ENCODE measurements at regions of chr17 and their contacts with region 1.

Region 1: DNA sequence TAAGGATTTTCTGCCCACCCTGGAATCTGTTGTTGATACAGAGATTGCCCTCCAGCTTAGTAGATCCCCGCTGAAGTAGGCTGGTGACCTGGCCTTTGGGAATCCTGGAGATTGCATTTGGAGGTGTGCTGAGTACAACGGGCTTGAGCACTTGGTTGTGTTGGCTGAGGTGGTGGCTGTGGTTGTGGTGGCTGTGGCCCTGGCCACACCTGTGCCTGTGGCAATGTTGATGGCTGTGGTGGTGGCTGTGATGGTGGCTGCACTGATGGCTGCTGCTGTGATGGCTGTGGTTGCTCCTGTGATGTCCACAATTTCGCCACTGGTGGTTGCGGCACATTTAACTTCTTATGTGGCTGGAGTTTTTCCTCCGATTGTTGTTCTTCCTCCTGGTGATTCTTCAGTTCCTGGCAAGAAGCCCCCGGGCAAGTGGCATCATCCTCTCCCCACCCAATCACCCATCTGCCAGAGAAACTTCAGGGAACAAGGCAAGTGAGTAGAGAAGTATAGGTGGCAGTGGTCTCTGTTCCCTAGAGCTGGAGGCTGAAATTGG is 4.2 kb downstream of the CCDC200 start:
- DNase-seq: peak in 1 of 5 donors; percentile 8
- ATAC-seq: no peak
- H3K4me3 ChIP-seq: no peak overlapping the region
- H3K27ac ChIP-seq: no peak overlapping the region
- H3K4me1 ChIP-seq: no peaks in the 10 kb centered on the region
- H3K27me3 ChIP-seq: no peaks in the 10 kb centered on the region
- CTCF ChIP-seq: no peak
- POLR2A ChIP-seq: no peak

Region 2: DNA sequence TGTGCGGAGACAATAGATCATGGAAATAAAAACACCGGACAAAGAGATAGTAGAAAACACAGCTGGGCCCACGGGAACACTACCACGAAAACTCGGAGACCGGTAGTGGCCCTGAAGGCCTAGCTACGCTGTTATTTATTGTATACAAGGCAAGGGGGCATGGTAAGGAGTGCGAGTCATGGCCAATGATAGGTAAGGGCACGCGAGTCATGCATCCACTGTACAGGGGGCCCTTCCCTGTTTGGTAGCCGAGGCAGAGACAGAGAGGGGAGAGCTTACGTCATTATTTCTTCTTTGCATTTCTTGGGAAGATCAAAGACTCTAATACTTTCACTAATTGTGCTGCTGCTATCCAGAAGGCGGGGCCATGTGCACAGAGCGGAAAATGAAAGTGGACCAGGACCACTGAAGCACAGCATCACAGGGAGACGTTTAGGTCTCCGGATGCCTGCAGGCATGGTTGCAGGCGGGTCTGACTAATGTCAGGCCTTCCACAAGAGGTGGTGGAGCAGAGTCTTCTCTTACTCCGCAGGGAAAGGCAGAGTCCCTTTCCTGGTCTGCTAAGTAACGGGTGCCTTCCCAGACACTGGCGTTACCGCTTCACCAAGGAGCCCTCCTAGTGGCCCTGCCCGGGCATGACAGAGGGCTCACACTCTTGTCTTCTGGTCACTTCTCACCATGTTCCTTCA is 100.1 kb after region 1 on chr17:
- intact Hi-C with region 1: loop called in 1 of 10 experiments (anchors 10 kb)
- DNase-seq: no peak
- ATAC-seq: peak in 1 of 4 donors; percentile 67
- H3K4me3 ChIP-seq: peak overlapping the region in 1 of 12 donors; percentile 27
- H3K27ac ChIP-seq: no peak overlapping the region
- H3K4me1 ChIP-seq: peaks cover 0 to 6% (median 0%) of the 10 kb centered on the region in 12 donors
- H3K27me3 ChIP-seq: peaks cover 0 to 9% (median 0%) of the 10 kb centered on the region in 9 donors
- CTCF ChIP-seq: peak in 4 of 12 donors; percentile 12 to 51 (median 16)
- POLR2A ChIP-seq: no peak